AG04449 (cell line): ENCODE measurements at regions of chr13 and their contacts with region 1.

Region 1: GRCh38 chr13:98842864-98843481 is 90.5 kb upstream of the SLC15A1 start:
- DNase-seq: no peak
- H3K4me3 ChIP-seq: no peak overlapping the region
- CTCF ChIP-seq: peak; percentile 89

Region 2: GRCh38 chr13:98466634-98467236 is 376.2 kb before region 1 on chr13:
- CTCF ChIA-PET with region 1: interaction called, 10 read pairs
- POLR2A ChIA-PET with region 1: no interaction called
- DNase-seq: no peak
- H3K4me3 ChIP-seq: no peak overlapping the region
- CTCF ChIP-seq: peak; percentile 77

Region 3: DNA sequence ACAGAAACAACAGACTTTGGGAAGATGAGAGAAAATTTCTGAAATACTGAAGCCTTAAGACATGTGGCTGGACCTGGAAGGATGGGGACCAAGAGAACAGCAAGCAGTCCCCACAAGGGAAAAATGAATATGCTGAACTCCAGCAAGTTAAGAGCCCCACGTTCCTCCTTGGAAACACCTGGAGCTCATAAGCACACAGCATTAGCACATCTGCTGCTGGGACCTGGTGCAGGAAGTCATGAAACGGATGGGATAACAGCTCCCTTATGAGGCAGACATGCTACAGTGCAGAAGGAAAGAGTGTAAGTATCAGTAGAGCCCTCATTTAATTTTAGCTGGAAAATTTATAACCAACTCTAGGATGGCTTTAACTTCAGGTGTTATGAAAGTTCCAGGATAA is 157.8 kb before region 1 on chr13:
- CTCF ChIA-PET with region 1: interaction called, 10 read pairs
- POLR2A ChIA-PET with region 1: no interaction called
- DNase-seq: no peak
- H3K4me3 ChIP-seq: no peak overlapping the region
- CTCF ChIP-seq: no peak

Region 4: DNA sequence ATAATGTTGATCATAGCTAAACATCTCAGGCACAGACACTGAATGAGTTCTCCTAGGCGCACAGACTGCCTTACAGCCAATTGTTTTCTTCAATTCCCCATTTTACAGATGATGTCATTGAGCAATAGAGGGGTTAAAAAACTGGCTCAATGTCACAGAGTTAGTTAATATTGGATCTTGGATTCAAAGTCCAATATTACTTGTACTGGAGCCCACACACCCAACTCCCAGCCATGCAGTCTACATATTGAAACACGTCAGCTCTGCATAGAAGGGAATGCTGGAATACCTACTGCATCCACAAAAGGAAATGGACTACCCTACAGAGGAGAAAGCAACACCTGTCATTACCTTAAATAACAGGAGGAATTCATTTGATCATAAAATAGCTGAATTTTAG is 14.4 kb before region 1 on chr13:
- CTCF ChIA-PET with region 1: interaction called, 21 read pairs
- POLR2A ChIA-PET with region 1: no interaction called
- DNase-seq: no peak
- H3K4me3 ChIP-seq: no peak overlapping the region
- CTCF ChIP-seq: no peak

Region 5: DNA sequence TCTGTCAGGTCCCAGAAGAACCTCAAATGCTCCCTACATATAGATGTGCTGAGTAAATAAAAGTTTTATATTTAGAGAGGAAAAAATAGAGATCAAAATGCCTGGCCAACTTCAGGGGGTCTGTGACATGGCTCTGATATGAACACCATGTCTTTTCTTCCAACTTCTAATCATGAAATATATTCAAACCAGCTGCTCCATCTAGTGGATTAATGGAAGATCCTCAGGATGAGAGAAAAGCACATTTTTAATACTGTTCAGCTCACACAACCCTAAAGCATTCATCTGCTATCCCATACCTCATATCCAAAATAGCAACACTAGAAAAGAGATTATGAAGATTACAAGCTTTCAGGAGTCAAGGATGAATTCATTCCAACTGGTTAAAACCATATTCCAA is 190.8 kb after region 1 on chr13:
- CTCF ChIA-PET with region 1: interaction called, 21 read pairs
- POLR2A ChIA-PET with region 1: no interaction called
- DNase-seq: no peak
- H3K4me3 ChIP-seq: no peak overlapping the region
- CTCF ChIP-seq: peak; percentile 46

Region 6: DNA sequence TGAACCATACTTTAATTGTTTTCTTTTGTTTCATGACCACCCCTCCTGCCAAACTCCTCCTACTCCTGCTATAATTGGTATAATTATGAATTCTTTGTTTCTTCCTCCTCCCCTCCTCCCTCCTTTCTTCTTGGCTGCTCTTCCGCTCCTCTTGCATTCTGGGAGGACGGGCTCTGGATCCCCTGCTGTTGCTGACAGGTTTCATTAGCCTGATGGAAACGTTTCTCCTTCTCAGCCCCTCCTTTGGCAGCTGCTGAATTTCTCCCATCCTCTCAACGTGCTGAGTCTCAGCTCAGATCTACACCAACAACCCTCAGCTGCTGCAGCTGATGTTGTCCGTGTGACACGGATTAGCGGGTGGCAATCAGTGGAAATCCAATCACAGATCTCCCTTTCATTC is 260.6 kb after region 1 on chr13:
- CTCF ChIA-PET with region 1: no interaction called
- POLR2A ChIA-PET with region 1: no interaction called
- DNase-seq: no peak
- H3K4me3 ChIP-seq: no peak overlapping the region
- CTCF ChIP-seq: no peak